Activated T-helper 1 cell treated with anti-CD3 and anti-CD28 coated beads, Interleukin-12 subunit alpha, Interleukin-12 subunit beta, Interleukin-2, Interleukin-4 antibody, amounts not matched to agents 30 ng/mL and 10 ng/mL and 1 ng/mL, durations not matched to agents 14 hours and 24 hours and 36 hours (primary cell): ENCODE measurements at regions of chr12 and their contacts with region 1.

Region 1: DNA sequence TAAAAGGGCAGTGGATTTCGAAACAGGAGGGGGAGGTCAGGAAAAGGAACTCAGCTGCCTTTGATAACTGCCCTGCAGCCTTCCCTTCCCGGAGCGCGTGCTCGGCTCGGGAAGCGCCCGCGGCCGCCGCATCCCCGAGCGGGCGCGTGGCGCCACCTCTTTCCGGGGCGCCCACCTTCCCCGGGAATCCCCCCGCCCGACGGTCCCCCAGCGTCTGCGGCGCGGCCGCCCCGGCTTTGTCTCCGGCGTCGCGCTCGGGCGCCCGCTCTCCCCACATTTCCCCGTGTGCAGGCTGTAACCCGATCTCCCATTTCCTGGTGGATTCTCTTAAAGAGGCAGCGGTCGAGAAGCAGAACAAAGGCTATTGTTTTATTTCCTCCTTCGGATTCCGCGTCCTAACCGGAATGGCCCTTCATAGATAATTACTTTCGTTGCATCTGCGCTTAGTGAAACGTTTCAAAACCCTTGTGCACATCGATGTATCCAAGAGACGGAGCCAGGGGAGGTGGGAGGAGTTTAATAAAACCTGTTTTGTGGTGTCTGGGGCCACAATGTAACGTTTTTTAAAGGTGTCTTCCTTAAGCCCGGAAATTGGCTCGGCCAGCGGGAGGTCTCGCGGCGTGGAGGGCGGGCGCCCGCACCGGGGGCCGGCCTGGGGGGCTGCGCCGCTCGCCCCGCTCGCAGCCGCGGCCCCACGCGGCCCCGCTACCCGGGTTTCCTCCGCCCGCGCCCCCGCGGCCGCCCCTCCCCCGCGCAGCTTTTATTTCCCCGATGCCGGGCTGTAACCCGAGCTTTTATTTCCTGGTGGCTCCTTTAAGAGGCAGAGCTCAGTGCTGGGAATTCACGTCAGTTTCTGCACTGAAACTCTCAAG is at the start of gene ETV6:
- DNase-seq: peak; percentile 74
- H3K4me3 Mint-ChIP-seq: peak within 1 kb of the TSS; percentile 95
- H3K27ac Mint-ChIP-seq: peak within 1 kb of the TSS; percentile 99
- H3K4me1 Mint-ChIP-seq: peaks cover 29% of the 10 kb centered on the region
- H3K27me3 Mint-ChIP-seq: peaks cover 3% of the 10 kb centered on the region
- total RNA-seq, gene ETV6: 117 and 131 TPM in 2 replicates

Region 2: GRCh38 chr12:10584415-10584814 is 1064.7 kb before region 1 on chr12:
- intact Hi-C with region 1: no loop called
- DNase-seq: no peak
- H3K4me3 Mint-ChIP-seq: no peak overlapping the region
- H3K27ac Mint-ChIP-seq: no peak overlapping the region
- H3K4me1 Mint-ChIP-seq: no peaks in the 10 kb centered on the region
- H3K27me3 Mint-ChIP-seq: no peaks in the 10 kb centered on the region

Region 3: DNA sequence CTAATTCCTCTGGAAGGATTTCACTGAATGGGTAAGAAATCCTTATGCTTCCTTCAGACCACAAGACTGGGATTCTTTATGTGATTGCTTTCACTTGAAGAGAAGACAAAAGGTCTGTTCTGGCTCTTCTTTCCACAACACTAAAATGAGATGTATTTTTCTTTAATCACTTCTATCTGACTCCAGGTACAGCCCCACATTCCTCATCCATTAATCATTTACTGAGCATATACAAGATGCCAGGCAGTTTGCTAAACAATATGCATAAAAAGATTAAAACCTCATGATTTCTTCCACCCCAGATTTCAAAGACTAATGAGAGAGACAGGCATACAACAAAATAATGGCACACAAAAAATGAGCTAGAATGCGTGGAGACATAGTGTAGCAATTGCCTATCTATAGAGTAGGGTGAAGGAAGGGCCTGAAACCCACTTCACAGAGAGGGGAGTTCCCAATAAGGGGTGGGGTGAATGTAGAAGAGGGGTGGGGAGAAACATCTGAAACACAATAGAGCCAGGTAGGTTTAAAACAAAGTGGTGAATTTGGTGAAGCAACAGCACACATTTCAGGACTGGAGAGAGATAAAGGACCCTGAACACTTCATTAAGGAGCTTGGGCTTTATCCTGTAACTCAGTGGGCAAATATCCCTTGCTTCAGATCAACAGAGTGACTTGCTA is 188.6 kb before region 1 on chr12:
- intact Hi-C with region 1: no loop called
- DNase-seq: no peak
- H3K4me3 Mint-ChIP-seq: no peak overlapping the region
- H3K27ac Mint-ChIP-seq: no peak overlapping the region
- H3K4me1 Mint-ChIP-seq: no peaks in the 10 kb centered on the region
- H3K27me3 Mint-ChIP-seq: no peaks in the 10 kb centered on the region

Region 4: GRCh38 chr12:11553871-11554533 is 95.1 kb before region 1 on chr12:
- intact Hi-C with region 1: loop called (anchors 1 kb)
- DNase-seq: peak; percentile 33
- H3K4me3 Mint-ChIP-seq: peak overlapping the region; percentile 45
- H3K27ac Mint-ChIP-seq: no peak overlapping the region
- H3K4me1 Mint-ChIP-seq: peaks cover 27% of the 10 kb centered on the region
- H3K27me3 Mint-ChIP-seq: peaks cover 8% of the 10 kb centered on the region

Region 5: GRCh38 chr12:11711651-11712327 is 62.7 kb after region 1 on chr12:
- intact Hi-C with region 1: loop called (anchors 1 kb)
- DNase-seq: no peak
- H3K4me3 Mint-ChIP-seq: no peak overlapping the region
- H3K27ac Mint-ChIP-seq: peak overlapping the region; percentile 75
- H3K4me1 Mint-ChIP-seq: peaks cover 76% of the 10 kb centered on the region
- H3K27me3 Mint-ChIP-seq: no peaks in the 10 kb centered on the region

Region 6: DNA sequence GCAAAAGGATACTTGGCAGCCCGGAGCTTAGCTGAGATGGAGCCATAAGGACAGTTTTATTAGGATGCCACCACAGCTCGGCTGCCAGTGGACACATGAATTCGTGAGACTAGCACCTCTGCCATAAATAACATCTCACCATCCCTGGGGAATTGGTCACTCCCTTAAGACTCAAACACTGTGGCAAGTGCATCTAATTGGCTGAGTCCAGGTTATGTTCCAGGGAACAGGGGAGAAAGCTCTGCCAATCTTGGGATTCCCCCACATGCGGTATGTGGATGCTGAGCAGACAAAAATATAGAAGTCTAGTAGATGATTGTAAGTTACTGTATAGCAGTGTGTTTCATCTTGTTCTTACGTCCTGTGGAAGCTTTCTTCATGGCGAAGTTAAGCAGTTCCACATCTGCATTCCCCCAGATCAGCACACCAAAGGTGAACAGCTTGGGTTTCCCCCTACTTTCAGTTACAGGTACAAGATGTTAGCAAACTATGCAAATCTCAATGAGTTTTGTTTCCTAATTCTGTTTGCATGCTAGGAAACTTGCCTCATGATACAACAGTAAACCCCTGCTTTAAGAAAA is 131.5 kb after region 1 on chr12:
- intact Hi-C with region 1: loop called (anchors 1 kb)
- DNase-seq: no peak
- H3K4me3 Mint-ChIP-seq: no peak overlapping the region
- H3K27ac Mint-ChIP-seq: peak overlapping the region; percentile 90
- H3K4me1 Mint-ChIP-seq: peaks cover 85% of the 10 kb centered on the region
- H3K27me3 Mint-ChIP-seq: no peaks in the 10 kb centered on the region

Region 7: GRCh38 chr12:11798856-11799501 is 149.9 kb after region 1 on chr12:
- intact Hi-C with region 1: no loop called
- DNase-seq: no peak
- H3K4me3 Mint-ChIP-seq: peak overlapping the region; percentile 24
- H3K27ac Mint-ChIP-seq: peak overlapping the region; percentile 78
- H3K4me1 Mint-ChIP-seq: peaks cover 73% of the 10 kb centered on the region
- H3K27me3 Mint-ChIP-seq: no peaks in the 10 kb centered on the region

Region 8: DNA sequence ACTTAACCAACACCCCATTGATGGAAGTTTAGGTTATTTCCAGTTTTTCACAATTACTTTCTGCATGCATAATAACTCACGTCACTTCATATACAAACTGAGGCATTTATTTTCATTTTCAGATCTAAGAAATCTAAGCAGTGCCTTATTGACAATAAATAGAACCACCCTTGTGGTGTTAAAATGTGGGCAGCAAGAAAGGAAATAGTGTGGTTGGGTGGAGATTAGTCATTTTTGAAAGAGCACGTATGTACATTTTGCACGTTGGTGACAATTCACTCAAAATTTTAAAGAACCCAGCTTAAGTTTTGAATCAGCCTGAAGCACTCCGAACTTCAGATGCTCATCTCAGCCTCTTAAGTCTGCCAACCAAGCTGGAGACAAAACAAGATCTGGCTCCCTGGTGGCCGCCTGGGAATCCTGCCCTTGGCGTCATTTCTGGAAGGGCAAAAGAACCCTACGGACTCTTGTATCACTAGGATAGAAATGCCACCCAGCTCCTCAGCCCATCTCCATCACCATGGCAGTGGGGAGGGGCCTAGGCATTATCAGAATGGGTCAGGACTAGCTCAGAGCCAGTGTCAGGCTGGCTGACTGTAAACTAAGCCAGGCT is 332.2 kb after region 1 on chr12:
- intact Hi-C with region 1: loop called (anchors 1 kb)
- DNase-seq: peak; percentile 73
- H3K4me3 Mint-ChIP-seq: peak overlapping the region; percentile 36
- H3K27ac Mint-ChIP-seq: peak overlapping the region; percentile 96
- H3K4me1 Mint-ChIP-seq: peaks cover 62% of the 10 kb centered on the region
- H3K27me3 Mint-ChIP-seq: no peaks in the 10 kb centered on the region

Region 9: DNA sequence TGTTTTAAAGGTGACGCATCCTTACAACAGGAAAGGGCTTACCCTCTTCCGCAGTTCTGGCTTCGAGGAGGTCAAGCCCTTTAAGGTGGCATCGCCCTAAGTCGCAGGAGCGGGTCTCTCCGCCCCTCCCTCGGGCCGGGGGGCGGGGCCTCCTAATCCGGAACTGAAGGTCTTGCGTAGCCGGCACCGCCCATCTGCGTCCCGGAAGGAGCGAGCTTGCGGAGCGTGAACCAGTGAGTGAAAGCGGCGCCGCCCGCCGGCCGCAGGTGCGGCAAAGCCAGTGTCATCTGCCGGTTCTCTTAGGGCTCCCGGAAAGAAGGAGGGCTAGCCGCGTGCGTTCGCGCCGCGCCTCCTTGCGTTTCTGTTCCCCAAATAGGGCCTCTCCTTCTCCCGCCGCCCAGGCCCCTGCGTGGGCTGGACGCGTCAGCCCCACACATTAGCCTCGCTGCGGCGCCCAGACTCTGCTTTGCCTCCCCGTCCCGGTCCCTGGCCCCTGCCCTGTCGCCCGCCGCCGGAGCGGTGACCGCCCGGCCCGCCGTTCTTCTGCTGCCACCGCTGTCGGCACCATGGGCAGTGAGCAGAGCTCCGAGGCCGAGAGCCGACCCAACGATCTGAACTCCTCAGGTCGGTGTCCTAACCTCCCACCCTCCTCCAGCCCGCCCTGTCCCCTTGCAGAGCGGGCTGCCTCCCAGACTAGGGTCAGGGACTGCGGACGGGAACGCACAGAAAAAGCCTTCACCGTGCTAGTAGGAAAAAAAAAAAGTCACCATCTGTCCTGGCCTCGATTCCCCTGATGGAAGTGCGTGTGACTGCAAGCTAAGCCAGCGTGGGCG is 708.0 kb after region 1 on chr12 and contains the start of gene BORCS5:
- intact Hi-C with region 1: loop called (anchors 2 kb)
- DNase-seq: peak; percentile 98
- H3K4me3 Mint-ChIP-seq: peak within 1 kb of the TSS; percentile 97
- H3K27ac Mint-ChIP-seq: peak within 1 kb of the TSS; percentile 96
- H3K4me1 Mint-ChIP-seq: peaks cover 48% of the 10 kb centered on the region
- H3K27me3 Mint-ChIP-seq: no peaks in the 10 kb centered on the region
- total RNA-seq, gene BORCS5: 34.5 and 39.6 TPM in 2 replicates